ENCODE measurements at regions of chr19 and their contacts with region 1.

Region 1: GRCh38 chr19:41945135-41945766 is 13.9 kb downstream of the RABAC1 start:
- DNase-seq: peak; percentile 67
- ATAC-seq: peak; percentile 82
- H3K4me3 Mint-ChIP-seq: peak overlapping the region; percentile 72
- H3K27ac Mint-ChIP-seq: peak overlapping the region; percentile 98
- H3K4me1 Mint-ChIP-seq: peaks cover 73% of the 10 kb centered on the region
- H3K27me3 Mint-ChIP-seq: no peaks in the 10 kb centered on the region
- CTCF ChIP-seq: no peak

Region 2: DNA sequence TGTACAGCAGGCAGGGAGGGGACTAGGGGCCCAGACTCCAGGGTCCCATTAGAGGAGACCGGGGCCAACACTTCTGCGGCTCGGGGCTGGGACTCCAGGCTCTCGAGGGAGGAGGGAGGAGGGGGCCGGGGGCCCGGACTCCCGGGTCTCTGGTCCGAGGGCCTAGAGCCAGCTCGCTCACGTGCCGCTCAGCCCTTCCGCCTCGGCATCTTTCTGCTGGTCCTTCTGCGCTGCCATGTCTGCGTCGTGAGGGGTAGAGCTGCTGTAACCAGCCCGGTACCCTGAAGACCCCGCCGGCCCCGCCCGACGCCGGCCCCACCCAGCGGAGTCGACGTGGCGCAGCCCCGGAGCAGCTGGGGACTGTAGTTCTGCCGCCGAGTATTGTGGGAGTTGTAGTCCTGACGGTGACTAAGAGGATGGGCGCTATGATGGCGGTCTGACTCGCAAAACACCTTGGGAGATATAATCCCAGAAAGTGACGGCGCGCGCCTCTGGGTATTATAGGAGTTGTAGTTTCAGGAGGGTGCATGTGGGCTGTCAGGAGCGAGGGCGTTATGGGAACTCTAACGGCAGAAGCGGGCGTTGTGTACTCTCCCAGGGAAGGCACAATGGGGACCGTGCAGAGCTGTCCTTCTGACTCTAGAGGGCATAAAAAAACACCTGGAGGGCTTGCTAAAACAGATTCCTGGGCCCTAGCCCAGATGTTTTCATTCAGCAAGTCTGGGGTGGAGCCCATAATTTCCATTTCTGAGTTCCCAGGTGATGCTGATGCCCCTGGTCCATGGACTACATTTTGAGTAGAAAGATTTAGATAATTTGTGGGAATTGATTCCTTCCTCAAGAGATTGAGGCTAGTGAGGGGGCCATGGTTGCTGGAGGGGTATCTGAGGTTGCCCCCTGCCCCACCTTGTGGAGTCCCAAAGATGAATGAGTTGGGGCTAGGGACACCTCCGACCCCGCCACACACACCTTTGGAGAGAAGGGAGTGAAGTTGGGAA is 14.1 kb after region 1 on chr19 and contains the start of gene RABAC1:
- CTCF ChIA-PET with region 1: interaction called, 7 read pairs
- POLR2A ChIA-PET with region 1: interaction called, 30 read pairs
- intact Hi-C with region 1: no loop called
- DNase-seq: peak; percentile 79
- ATAC-seq: peak; percentile 91
- H3K4me3 Mint-ChIP-seq: peak within 1 kb of the TSS; percentile 90
- H3K27ac Mint-ChIP-seq: peak within 1 kb of the TSS; percentile 90
- H3K4me1 Mint-ChIP-seq: peaks cover 17% of the 10 kb centered on the region
- H3K27me3 Mint-ChIP-seq: no peaks in the 10 kb centered on the region
- CTCF ChIP-seq: no peak
- total RNA-seq, gene RABAC1: 96.7 and 102 TPM in 2 replicates

Region 3: DNA sequence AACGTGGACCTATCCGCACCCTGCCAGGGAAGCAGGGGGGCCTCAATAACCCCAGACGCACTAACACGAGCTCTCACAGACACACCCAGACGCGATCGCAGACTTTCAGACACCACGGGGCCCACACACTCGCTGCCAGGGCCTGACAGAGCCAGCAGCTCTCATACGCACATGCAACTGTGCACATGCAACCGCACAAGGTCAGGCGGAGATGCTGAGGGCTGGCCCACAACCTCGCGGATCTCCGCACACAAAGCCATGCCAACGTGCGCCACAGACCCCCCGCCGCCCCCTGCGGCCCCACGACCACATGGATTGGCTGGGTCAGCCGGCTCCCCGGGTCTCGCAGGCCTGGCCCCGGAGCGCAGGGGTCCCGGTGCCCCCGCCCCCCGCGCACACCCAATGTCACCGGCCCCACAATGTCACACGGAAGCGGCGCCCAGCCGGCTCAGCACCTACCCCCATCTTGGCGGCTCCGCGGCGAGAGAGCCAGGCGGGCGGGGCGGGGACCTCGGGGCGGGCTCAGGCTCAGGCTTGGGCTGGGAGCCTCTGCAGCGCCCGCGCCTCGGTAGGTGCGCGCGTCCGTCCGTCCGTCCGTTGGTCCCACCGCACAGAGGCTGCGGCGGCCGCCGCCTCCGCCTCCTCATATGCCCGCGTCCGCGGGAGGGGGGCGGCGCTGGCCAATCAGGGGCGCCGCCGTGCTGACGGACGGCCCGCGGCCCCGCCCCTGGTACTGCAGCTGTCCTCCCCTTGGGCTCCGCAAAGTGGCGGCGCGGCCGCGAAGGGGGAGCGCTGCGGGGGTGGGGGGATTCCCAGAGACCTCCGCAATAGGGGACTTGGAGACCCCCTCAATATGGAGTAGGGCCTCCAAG is 48.6 kb after region 1 on chr19 and contains the start of gene ATP1A3:
- CTCF ChIA-PET with region 1: no interaction called
- POLR2A ChIA-PET with region 1: no interaction called
- intact Hi-C with region 1: no loop called
- DNase-seq: peak; percentile 71
- ATAC-seq: peak; percentile 85
- H3K4me3 Mint-ChIP-seq: peak within 1 kb of the TSS; percentile 82
- H3K27ac Mint-ChIP-seq: no peak within 1 kb of the TSS
- H3K4me1 Mint-ChIP-seq: peaks cover 34% of the 10 kb centered on the region
- H3K27me3 Mint-ChIP-seq: peaks cover 31% of the 10 kb centered on the region
- CTCF ChIP-seq: no peak
- total RNA-seq, gene ATP1A3: 1.4 and 1.8 TPM in 2 replicates

Region 4: DNA sequence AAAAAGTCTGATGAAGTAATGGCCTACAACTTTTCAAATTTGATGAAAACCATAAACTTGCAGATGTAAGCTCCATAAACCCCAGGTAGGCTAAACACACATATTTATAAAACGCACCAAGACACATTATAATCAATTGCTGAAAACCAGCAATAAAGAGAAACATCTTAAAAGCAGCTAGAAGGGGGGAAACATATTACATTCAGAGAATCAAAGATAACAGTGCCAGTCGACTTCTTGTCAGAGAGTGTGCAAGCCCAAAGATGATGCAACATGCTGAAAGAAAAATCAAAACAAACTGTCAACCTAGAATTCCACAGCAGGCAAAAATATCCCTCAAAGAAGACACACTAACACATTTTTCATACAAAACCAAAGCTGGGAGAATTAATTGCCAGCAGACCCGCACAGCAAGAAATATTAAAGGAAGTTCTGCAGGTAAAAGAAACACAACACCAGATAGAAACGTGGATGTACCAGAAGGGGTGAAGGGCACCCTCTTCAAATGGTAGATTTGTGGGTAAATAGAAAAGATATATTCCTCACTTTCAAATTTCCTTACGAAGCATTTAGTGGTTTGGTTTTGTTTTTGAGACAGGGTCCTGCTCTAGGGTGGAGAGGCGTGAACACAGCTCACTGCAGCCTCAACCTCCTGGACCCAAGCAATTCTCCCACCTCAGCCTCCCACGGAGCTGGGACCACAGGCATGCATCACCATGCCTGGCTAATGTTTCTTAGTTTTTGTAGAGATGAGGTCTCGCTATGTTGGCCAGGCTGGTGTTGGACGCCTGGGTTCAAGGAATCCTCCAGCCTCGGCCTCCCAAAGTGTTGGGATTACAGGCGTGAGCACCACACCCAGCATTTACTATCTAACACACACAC is 65.2 kb after region 1 on chr19:
- CTCF ChIA-PET with region 1: no interaction called
- POLR2A ChIA-PET with region 1: interaction called, 12 read pairs
- intact Hi-C with region 1: no loop called
- DNase-seq: no peak
- ATAC-seq: no peak
- H3K4me3 Mint-ChIP-seq: no peak overlapping the region
- H3K27ac Mint-ChIP-seq: no peak overlapping the region
- H3K4me1 Mint-ChIP-seq: no peaks in the 10 kb centered on the region
- H3K27me3 Mint-ChIP-seq: no peaks in the 10 kb centered on the region
- CTCF ChIP-seq: no peak

Measured in activated B cell treated with CpG ODN at 0.5 μM for 24 hours (primary cell).